ENCODE measurements at regions of chr3 and their contacts with region 1.

Region 1: DNA sequence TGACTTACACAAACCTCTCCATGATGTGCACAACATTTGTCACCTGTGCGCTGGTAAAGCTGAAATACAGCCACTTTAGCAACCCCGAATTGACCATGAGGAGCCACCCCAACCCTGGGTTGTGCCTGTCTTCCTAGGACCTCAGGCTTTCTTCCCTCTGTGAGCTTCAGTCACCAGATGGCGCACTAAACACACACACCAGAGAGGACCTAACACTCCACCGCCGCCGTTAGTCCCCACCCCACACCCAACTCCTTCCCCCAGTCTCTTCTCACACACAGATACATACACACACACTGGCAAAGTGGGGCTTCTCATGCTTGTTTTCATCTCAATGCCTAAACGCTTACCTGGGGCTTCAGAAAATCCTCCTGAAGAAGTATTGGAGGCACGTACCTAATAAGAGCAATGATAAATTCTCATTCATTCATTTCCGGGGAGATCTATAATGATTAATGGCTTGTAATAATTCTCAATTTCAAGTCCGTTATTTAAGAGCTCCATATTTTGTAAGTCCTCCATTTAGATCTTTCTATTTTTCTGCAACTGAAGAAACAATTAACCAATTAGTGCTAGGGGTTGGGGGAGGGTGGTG is 2.1 kb upstream of the CCDC80 start:
- DNase-seq: peak; percentile 81
- CTCF ChIP-seq: peak; percentile 81

Region 2: GRCh38 chr3:111737706-111738086 is 905.3 kb before region 1 on chr3:
- CTCF ChIA-PET with region 1: no interaction called
- POLR2A ChIA-PET with region 1: no interaction called
- DNase-seq: no peak
- CTCF ChIP-seq: no peak

Region 3: DNA sequence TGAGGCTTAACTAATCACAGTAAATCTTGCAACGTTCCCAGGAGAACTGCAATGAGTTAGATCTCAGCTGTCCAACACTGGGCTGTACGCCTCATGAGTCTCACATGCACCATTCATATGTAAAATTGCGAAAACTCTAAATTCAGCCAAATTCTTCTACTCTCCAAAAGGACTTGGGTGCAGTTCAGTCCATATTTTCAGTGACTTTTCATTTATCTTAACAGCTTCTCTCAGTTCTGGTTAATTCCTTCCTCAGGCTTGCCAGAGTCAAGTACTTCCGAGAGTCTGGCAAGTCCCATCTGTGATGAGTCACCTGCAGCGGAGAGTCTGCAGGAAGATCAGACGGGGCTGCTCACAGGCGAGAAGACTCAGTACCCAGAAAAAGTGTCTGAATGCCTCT is 13.6 kb before region 1 on chr3:
- CTCF ChIA-PET with region 1: interaction called, 42 read pairs
- POLR2A ChIA-PET with region 1: no interaction called
- DNase-seq: no peak
- CTCF ChIP-seq: no peak

Region 4: GRCh38 chr3:112676659-112677234 is 33.7 kb after region 1 on chr3:
- CTCF ChIA-PET with region 1: interaction called, 11 read pairs
- POLR2A ChIA-PET with region 1: no interaction called
- DNase-seq: peak; percentile 83
- CTCF ChIP-seq: no peak

Region 5: DNA sequence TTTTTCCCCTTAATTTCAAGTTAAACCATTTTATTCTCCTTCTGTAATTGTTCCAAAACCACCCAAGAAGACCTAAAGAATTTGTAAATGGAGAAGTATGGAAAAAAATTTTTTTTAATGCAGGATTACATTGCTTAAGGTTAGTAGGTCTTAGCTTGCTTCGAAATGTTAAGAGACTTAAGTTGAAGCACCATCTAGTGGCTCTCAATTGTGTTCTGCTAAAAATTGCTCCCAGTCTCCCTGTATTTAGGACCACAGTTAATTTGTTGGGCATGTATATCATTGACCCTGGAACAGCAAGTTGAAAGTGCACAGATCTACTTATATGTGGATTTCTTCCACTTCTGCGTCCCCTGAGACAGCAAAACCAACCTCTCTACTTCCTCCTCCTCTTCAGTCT is 171.3 kb after region 1 on chr3:
- CTCF ChIA-PET with region 1: interaction called, 12 read pairs
- POLR2A ChIA-PET with region 1: no interaction called
- DNase-seq: no peak
- CTCF ChIP-seq: peak; percentile 4

Region 6: DNA sequence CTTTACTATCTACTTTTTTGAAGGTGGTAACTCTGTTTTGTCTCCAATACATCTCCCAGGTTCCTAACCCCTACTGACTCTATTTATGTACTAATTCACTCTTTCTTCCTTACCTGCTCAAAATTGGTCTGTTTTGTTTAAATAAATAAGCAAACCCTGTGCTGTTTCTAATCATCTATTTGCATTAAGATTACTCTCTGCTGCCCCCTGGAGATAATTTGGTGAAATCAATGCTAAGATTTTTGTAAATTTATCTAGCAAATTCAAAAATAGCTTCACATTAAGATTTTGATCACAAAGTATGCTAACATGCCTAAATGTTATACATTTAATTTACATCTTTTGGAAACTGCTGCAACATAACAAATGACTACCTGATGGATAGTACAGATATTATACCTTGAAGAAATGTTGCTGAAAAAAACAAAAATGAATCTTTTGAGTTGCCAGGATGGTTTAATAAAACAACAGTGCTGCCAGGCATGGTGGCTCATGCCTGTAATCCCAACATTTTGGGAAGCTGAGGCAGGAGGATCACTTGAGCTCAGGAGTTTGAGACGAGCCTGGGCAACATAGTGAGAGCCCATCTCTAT is 336.3 kb after region 1 on chr3:
- CTCF ChIA-PET with region 1: interaction called, 62 read pairs
- POLR2A ChIA-PET with region 1: no interaction called
- DNase-seq: no peak
- CTCF ChIP-seq: peak; percentile 40

Region 7: DNA sequence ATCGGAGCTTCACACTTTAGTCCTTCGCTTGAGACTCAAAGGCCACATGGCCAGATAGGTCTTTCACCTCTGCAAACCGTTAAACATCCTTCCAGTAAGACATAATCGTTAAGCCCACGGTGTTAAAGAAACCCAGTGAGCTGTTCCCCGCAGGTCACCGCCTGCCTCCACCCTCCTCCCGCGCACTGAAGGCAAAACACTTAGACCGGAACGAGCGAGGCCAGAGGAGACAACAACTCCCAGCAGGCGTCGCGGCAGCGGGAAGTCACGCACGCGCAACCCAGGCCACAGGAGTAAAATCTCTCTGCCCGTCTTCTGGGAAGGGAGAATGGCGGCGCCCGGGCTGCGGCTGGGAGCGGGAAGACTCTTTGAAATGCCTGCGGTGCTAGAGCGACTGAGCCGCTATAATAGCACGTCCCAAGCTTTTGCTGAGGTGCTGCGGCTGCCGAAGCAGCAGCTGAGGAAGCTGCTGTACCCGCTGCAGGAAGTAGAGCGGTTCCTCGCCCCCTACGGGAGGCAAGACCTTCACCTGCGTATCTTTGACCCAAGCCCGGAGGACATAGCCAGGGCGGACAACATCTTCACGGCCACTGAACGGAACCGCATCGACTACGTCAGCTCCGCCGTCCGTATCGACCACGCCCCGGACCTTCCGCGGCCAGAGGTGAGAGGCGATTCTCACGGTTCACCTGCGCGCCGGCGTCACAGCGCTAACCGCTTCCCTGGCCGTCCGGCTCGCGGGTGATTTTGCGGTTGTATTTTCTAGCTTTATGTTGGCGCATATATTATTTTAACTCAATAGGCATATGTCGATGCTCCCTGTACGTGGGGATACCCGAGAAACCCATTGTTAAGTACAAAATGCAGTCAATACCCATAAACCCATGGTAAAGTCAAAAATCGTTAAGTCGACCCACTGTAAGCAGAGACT is 347.9 kb after region 1 on chr3 and contains the start of gene GTPBP8:
- CTCF ChIA-PET with region 1: interaction called, 16 read pairs
- POLR2A ChIA-PET with region 1: no interaction called
- DNase-seq: peak; percentile 85
- CTCF ChIP-seq: no peak

Measured in GM10248 (cell line).